CD8-positive, alpha-beta memory T cell (primary cell): ENCODE measurements at regions of chr1 and their contacts with region 1.

Region 1: GRCh38 chr1:28329395-28330153 is 734 bp downstream of the MED18 start:
- DNase-seq: no peak
- H3K4me3 ChIP-seq: peak overlapping the region; percentile 85
- H3K4me3 Mint-ChIP-seq: peak overlapping the region; percentile 89 to 97 (median 91)
- H3K27ac ChIP-seq: peak overlapping the region; percentile 93
- H3K27ac Mint-ChIP-seq: peak overlapping the region; percentile 95 to 99 (median 98)
- H3K4me1 ChIP-seq: peaks cover 17% of the 10 kb centered on the region
- H3K4me1 Mint-ChIP-seq: peaks cover 26 to 42% (median 42%) of the 10 kb centered on the region in 3 donors
- H3K27me3 ChIP-seq: no peaks in the 10 kb centered on the region
- H3K27me3 Mint-ChIP-seq: peaks cover 0 to 5% of the 10 kb centered on the region in 2 donors

Region 2: GRCh38 chr1:28235755-28236655 is 93.6 kb before region 1 on chr1 and contains the start of gene ATP5IF1:
- CTCF ChIA-PET with region 1: interaction called, 3 read pairs
- POLR2A ChIA-PET with region 1: interaction called, 10 read pairs
- DNase-seq: peak; percentile 89 to 96 (median 93)
- H3K4me3 ChIP-seq: peak within 1 kb of the TSS; percentile 55
- H3K4me3 Mint-ChIP-seq: peak within 1 kb of the TSS in 2 of 7 donors; percentile 14 to 66
- H3K27ac ChIP-seq: peak within 1 kb of the TSS; percentile 92
- H3K27ac Mint-ChIP-seq: peak within 1 kb of the TSS in 1 of 8 donors; percentile 17
- H3K4me1 ChIP-seq: peaks cover 33% of the 10 kb centered on the region
- H3K4me1 Mint-ChIP-seq: peaks cover 15 to 34% (median 23%) of the 10 kb centered on the region in 3 donors
- H3K27me3 ChIP-seq: no peaks in the 10 kb centered on the region
- H3K27me3 Mint-ChIP-seq: no peaks in the 10 kb centered on the region
- total RNA-seq, gene ATP5IF1: 135 to 139 TPM

Region 3: GRCh38 chr1:28259307-28260167 is 70.0 kb before region 1 on chr1 and contains the start of gene SESN2:
- CTCF ChIA-PET with region 1: interaction called, 10 read pairs
- POLR2A ChIA-PET with region 1: interaction called, 12 read pairs
- DNase-seq: peak; percentile 98 to 99 (median 99)
- H3K4me3 ChIP-seq: peak within 1 kb of the TSS; percentile 84
- H3K4me3 Mint-ChIP-seq: peak within 1 kb of the TSS; percentile 80 to 88 (median 84)
- H3K27ac ChIP-seq: peak within 1 kb of the TSS; percentile 81
- H3K27ac Mint-ChIP-seq: peak within 1 kb of the TSS; percentile 19 to 85 (median 72)
- H3K4me1 ChIP-seq: peaks cover 50% of the 10 kb centered on the region
- H3K4me1 Mint-ChIP-seq: peaks cover 44 to 56% (median 56%) of the 10 kb centered on the region in 3 donors
- H3K27me3 ChIP-seq: no peaks in the 10 kb centered on the region
- H3K27me3 Mint-ChIP-seq: peaks cover 0 to 1% of the 10 kb centered on the region in 2 donors
- total RNA-seq, gene SESN2: 19.0 to 19.8 TPM